ENCODE measurements at regions of chr20 and their contacts with region 1.

Region 1: GRCh38 chr20:56171087-56172012 is 77.2 kb upstream of the MC3R start:
- DNase-seq: no peak
- ATAC-seq: peak in 3 of 8 donors; percentile 38 to 62 (median 41)
- H3K4me3 ChIP-seq: no peak overlapping the region
- H3K27ac ChIP-seq: no peak overlapping the region
- H3K4me1 ChIP-seq: no peaks in the 10 kb centered on the region
- H3K27me3 ChIP-seq: peaks cover 0 to 10% (median 0%) of the 10 kb centered on the region in 7 donors
- CTCF ChIP-seq: peak in 6 of 9 donors; percentile 17 to 51 (median 36)

Region 2: DNA sequence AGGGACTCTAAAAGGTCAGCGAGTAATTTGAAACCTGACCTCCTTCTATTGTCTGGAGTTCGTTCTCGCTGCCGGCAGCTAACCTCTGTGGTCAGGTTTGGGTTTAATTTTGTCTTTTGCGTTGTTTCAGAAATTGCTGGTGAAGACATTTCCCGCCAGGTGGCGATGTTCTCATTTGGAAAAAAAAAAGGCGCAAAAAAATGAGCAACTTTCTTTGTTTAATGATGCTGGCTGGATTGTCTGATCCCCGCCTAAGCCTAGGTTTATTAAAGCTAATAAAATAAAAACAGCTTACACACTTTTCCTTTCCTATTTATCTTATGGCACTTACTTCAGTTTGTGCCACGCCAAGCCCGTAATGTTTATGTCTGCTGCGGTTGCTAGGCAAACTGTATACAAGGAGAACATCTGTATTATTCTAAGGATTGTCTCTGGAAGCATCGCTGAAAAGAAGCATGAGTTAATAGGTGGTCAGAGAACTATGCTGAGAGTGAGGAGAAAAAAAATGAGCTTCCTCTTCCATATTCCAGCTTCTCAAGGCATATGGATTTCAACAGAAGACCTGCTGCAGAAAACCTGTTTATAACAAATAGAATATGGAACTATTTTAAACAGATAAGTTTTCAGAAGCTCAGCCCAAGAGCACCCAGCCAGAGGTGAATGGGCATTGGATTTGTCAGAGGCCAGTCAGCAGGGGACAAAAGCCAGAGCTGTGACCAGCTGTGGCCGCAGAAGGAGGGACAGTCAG is 1490.3 kb before region 1 on chr20:
- intact Hi-C with region 1: loop called in 2 of 10 experiments (anchors 5 to 10 kb)
- DNase-seq: no peak
- ATAC-seq: no peak
- H3K4me3 ChIP-seq: no peak overlapping the region
- H3K27ac ChIP-seq: no peak overlapping the region
- H3K4me1 ChIP-seq: peaks cover 0 to 7% (median 0%) of the 10 kb centered on the region in 9 donors
- H3K27me3 ChIP-seq: peaks cover 5 to 47% (median 35%) of the 10 kb centered on the region in 7 donors
- CTCF ChIP-seq: peak; percentile 41 to 75 (median 60)

Region 3: GRCh38 chr20:55415567-55416142 is 755.7 kb before region 1 on chr20:
- intact Hi-C with region 1: loop called in 1 of 10 experiments (anchors 10 kb)
- DNase-seq: no peak
- ATAC-seq: no peak
- H3K4me3 ChIP-seq: no peak overlapping the region
- H3K27ac ChIP-seq: no peak overlapping the region
- H3K4me1 ChIP-seq: peaks cover 0 to 5% (median 0%) of the 10 kb centered on the region in 9 donors
- H3K27me3 ChIP-seq: no peaks in the 10 kb centered on the region
- CTCF ChIP-seq: peak in 6 of 9 donors; percentile 26 to 49 (median 36)

Region 4: GRCh38 chr20:56111961-56112730 is 59.2 kb before region 1 on chr20:
- intact Hi-C with region 1: no loop called
- DNase-seq: no peak
- ATAC-seq: peak in 1 of 8 donors; percentile 18
- H3K4me3 ChIP-seq: no peak overlapping the region
- H3K27ac ChIP-seq: no peak overlapping the region
- H3K4me1 ChIP-seq: no peaks in the 10 kb centered on the region
- H3K27me3 ChIP-seq: no peaks in the 10 kb centered on the region
- CTCF ChIP-seq: no peak

Region 5: DNA sequence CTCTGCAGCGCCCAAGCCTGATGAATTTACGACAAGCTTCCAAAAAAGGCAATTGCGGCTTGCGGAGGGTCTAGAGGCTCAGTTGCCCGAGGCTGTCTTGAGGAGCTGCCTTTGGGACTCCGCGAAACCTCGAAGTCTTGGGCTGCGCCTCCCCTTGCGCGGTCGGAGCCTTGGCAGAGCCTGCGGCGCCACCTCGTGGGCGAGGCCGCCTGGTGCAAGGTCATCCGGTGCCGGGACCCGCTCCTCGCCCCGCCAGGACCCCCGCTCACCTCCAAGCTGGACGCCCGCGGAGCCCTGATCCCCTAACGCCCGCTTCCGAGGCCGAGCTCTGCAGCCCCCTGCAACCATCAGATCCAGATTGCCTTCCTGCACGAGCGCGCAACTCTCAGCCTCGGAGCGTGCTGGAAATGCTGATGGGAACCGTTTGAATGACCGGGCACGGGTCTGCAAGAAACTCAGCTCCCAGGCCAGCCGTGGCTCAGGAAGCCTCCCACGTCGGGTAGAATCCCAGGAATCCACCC is 172.6 kb after region 1 on chr20:
- intact Hi-C with region 1: no loop called
- DNase-seq: peak in 1 of 2 donors; percentile 41
- ATAC-seq: peak in 5 of 8 donors; percentile 51 to 75 (median 66)
- H3K4me3 ChIP-seq: peak overlapping the region in 3 of 10 donors; percentile 4 to 22 (median 10)
- H3K27ac ChIP-seq: no peak overlapping the region
- H3K4me1 ChIP-seq: peaks cover 0 to 14% (median 6%) of the 10 kb centered on the region in 9 donors
- H3K27me3 ChIP-seq: peaks cover 0 to 73% (median 62%) of the 10 kb centered on the region in 7 donors
- CTCF ChIP-seq: peak in 8 of 9 donors; percentile 35 to 74 (median 66)